Ascending aorta (tissue), 2 donors: ENCODE measurements at regions of chr12 and their contacts with region 1.

Region 1: DNA sequence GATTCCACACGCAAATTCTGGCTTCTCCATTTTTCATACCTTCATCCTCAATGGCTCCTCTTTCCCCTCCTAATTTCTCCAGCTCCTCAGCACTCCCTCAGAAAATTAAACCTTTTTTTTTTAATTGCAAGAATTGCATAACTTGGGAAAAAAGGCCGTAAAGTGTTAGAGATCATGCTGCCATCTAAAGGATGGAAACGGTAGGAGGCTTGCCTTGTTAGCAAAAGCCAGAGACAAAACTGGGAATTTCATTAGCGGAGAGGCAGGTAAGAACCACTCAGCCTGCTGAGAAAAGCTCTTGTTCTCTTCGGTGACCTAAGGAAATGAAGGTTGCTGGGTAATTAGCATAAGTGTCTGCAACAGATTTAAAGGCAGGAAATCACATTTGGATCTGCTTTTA is 204.3 kb downstream of the AEBP2 start:
- DNase-seq: no peak
- H3K4me3 ChIP-seq: no peak overlapping the region
- H3K27ac ChIP-seq: no peak overlapping the region
- H3K4me1 ChIP-seq: peaks cover 0 to 3% of the 10 kb centered on the region in 2 donors
- H3K27me3 ChIP-seq: no peaks in the 10 kb centered on the region
- CTCF ChIP-seq: peak; percentile 22 to 74 (median 70)

Region 2: DNA sequence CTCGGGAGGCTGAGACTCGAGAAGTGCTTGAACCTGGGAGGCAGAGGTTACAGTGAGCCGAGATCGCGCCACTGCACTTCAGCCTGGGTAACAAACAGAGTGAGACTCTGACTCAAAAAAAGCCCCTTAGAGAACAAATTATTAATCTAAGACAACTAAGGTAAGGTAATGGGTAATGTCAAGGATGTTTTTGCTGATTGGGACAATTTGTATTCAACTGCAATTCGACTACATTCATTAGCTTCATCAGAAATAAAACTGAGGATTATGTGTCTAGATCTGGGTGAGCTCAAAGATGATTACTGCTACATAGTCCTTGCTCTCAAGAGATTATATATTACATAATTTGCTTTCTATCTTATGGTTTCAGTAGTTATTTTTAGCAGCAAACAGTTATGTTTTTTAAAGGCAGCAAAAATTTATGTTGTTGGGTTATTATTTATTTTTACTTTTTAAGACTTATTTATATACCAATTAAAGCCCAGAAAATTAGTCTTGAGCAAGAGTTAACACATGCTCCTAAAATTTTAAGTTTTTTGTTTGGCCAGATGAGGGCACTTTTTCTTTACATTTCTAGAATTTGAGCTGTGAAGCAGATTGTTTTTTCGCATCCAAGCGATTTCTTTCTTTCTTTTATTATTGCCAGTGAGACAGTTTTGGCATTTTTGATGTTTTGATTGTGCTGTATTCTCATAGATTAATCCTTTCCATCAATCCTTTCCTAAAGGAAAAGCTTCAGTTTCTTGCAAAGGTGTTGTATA is 461.8 kb before region 1 on chr12:
- intact Hi-C with region 1: loop called (anchors 2 kb)
- DNase-seq: no peak
- H3K4me3 ChIP-seq: no peak overlapping the region
- H3K27ac ChIP-seq: no peak overlapping the region
- H3K4me1 ChIP-seq: peaks cover 0 to 6% of the 10 kb centered on the region in 2 donors
- H3K27me3 ChIP-seq: no peaks in the 10 kb centered on the region
- CTCF ChIP-seq: peak in 1 of 3 experiments; percentile 50

Region 3: DNA sequence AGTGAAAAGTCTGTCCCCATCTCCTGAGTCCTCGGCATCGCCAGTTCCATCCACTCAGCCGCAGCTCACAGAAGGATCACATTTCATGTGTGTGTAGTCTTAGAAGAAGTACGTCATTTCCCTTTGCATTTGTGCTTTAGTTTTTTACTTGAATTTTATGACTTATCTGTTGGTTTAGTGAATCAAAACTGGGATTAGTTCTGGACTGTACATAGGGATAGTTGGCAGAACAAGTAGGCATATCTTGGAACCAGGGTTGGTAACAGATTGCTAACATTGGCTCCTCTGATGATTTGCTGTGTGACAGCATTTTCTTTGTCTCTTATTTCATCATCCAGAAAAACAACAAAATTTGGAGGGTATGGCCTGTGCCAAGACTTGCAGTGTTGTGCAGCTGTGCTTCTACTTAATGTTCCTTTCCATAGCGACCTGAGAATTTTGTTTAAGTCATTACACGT is 273.9 kb before region 1 on chr12:
- intact Hi-C with region 1: loop called (anchors 10 kb)
- DNase-seq: peak; percentile 14 to 72
- H3K4me3 ChIP-seq: peak overlapping the region in 1 of 2 donors; percentile 5
- H3K27ac ChIP-seq: peak overlapping the region; percentile 45 to 74
- H3K4me1 ChIP-seq: no peaks in the 10 kb centered on the region
- H3K27me3 ChIP-seq: no peaks in the 10 kb centered on the region
- CTCF ChIP-seq: no peak

Region 4: GRCh38 chr12:19439059-19440018 is 204.3 kb before region 1 on chr12 and contains the start of gene AEBP2:
- intact Hi-C with region 1: loop called (anchors 10 kb)
- DNase-seq: peak; percentile 71 to 97
- H3K4me3 ChIP-seq: peak within 1 kb of the TSS; percentile 87 to 93
- H3K27ac ChIP-seq: peak within 1 kb of the TSS; percentile 96 to 99
- H3K4me1 ChIP-seq: peaks cover 10 to 14% of the 10 kb centered on the region in 2 donors
- H3K27me3 ChIP-seq: no peaks in the 10 kb centered on the region
- CTCF ChIP-seq: no peak
- total RNA-seq, gene AEBP2: 29.6 TPM

Region 5: DNA sequence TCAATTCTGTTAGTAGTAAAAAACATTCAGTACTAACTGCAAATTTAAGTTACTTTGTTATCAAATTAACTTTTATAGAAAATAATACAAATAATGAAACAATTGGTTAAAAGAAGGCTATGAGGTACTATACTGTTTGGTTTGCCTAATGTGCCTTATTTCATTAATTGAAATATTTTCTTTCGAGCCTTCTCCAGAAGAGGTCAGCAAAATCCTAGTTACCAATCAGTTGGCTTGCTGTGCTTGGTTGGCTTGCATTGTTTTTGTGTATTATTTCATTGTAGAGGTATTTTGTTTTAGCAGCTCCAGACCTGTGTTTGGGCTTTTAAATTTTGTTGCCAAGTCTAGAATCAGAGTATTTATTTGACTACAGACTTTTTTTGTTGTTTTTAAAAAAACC is 135.8 kb before region 1 on chr12:
- intact Hi-C with region 1: loop called (anchors 2 kb)
- DNase-seq: no peak
- H3K4me3 ChIP-seq: no peak overlapping the region
- H3K27ac ChIP-seq: peak overlapping the region in 1 of 2 donors; percentile 61
- H3K4me1 ChIP-seq: peaks cover 5 to 24% of the 10 kb centered on the region in 2 donors
- H3K27me3 ChIP-seq: no peaks in the 10 kb centered on the region
- CTCF ChIP-seq: peak in 2 of 3 experiments; percentile 17 to 48

Region 6: GRCh38 chr12:19946549-19946948 is 302.9 kb after region 1 on chr12:
- intact Hi-C with region 1: no loop called
- DNase-seq: peak in 1 of 2 donors; percentile 81
- H3K4me3 ChIP-seq: peak overlapping the region in 1 of 2 donors; percentile 17
- H3K27ac ChIP-seq: peak overlapping the region; percentile 65 to 73
- H3K4me1 ChIP-seq: peaks cover 0 to 6% of the 10 kb centered on the region in 2 donors
- H3K27me3 ChIP-seq: no peaks in the 10 kb centered on the region
- CTCF ChIP-seq: no peak